ENCODE measurements at regions of chr10 and their contacts with region 1.

Region 1: DNA sequence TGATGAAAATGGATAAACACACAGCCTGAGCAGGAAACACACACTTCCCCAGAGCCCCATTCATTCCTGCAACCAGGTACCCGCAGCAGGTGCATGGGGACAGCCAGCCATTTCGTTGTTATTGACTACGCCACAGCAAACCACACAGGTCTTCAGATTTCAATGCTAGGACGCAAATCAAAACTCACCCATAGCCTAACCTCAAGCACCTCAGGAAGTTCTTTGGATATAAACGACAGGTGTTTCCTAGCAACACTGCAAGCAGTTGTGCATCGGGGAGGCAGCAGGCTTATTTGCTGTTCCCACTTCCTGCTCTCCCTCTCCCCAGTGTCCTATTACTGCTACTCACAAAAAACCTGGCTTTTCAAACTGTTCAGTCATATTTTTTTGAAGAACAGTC is 176.5 kb upstream of the FRMD4A start:
- DNase-seq: no peak
- H3K4me3 ChIP-seq: no peak overlapping the region
- H3K27ac ChIP-seq: no peak overlapping the region
- H3K4me1 ChIP-seq: no peaks in the 10 kb centered on the region
- H3K27me3 ChIP-seq: no peaks in the 10 kb centered on the region; the same call in 1 of the 2 replicates

Region 2: DNA sequence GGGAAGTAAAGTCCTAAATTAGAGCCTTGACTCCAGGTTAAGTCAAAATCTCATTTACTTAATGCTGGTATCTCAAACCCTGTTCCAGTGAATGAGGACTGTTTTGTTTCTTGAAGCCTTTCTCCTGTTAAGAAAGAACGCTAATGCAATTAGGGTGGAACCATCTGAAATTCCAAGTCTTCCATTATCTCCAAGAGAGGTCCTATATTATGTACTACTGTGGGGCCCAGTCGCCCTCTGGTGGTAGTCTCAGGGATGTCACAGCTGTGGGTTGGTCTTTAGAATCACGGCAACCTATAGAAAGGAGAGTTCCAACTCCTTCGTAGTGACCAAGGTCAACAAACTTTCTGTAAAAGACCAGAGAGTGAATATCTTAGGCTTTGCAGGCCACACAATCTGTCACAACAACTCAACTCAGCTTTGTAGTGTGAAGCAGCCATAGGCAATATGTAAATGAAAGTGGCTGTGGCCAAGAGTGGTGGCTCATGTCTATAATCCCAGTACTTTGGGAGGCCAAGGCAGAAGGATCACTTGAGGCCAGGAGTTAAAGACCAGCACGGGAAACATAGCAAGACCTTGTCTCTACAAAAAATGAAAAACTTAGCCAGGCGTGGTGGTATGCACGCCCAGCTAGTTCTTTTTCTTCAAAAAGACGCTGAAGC is 599.3 kb after region 1 on chr10:
- in situ Hi-C with region 1: loop called (anchors 25 kb)
- DNase-seq: peak; percentile 73
- H3K4me3 ChIP-seq: no peak overlapping the region
- H3K27ac ChIP-seq: no peak overlapping the region
- H3K4me1 ChIP-seq: no peaks in the 10 kb centered on the region
- H3K27me3 ChIP-seq: no peaks in the 10 kb centered on the region

Measured in GM23248 (cell line).